PC-3 (cell line): ENCODE measurements at regions of chr6 and their contacts with region 1.

Region 1: GRCh38 chr6:18122124-18123093 is at the start of gene NHLRC1:
- DNase-seq: peak; percentile 93
- ATAC-seq: peak; percentile 98
- H3K4me3 ChIP-seq: peak within 1 kb of the TSS; percentile 69
- H3K27ac ChIP-seq: peak within 1 kb of the TSS; percentile 52
- H3K4me1 ChIP-seq: peaks cover 14% of the 10 kb centered on the region
- H3K27me3 ChIP-seq: no peaks in the 10 kb centered on the region
- CTCF ChIP-seq: peak; percentile 92
- total RNA-seq, gene NHLRC1: 0.81 and 1.3 TPM in 2 replicates

Region 2: GRCh38 chr6:17907406-17908229 is 214.8 kb before region 1 on chr6:
- CTCF ChIA-PET with region 1: no interaction called
- POLR2A ChIA-PET with region 1: no interaction called
- intact Hi-C with region 1: loop called (anchors 5 kb)
- DNase-seq: peak; percentile 97
- ATAC-seq: peak; percentile 94
- H3K4me3 ChIP-seq: no peak overlapping the region
- H3K27ac ChIP-seq: peak overlapping the region; percentile 88
- H3K4me1 ChIP-seq: peaks cover 43% of the 10 kb centered on the region
- H3K27me3 ChIP-seq: no peaks in the 10 kb centered on the region
- CTCF ChIP-seq: peak; percentile 56

Region 3: DNA sequence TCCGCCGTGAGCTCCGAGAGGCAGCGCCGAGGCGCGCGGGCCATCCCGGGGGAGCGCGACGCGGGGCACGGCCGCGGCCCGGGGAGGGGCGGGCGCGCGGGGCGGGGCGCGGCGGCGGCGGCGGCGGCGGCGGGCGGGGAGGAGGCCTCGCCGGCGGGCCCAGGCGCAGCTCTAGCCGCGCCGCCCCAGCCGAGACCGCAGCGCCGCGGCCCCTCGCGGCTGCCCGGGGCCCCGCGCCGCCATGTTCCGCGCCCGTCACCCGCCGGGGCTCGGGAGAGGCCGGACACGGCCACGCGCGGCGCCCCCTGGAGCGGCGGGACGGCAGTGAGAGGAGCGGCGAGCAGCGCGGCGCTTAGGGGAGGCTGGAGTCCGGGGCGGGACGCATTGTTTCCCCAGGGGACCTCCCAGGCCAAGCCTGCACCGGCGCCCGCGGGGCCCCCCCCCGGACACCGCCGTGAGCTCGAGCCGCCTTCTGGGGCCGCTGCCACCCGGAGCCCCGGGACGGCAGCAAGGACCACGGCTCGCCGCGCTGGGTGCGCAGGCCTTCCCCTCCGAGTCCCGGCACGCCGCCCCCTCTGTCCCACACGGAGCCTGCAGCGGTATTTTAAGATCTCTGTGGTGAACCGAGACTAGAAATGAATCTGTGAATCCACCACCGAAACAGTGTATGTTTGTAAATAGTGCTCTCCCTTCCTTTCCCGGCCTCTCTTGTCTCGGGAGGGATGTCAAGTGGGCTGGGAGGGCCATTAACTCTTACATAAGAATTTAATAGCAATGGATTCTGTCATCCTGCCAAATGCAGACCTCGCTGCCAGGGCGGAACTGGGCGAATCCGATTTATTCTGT is 134.6 kb before region 1 on chr6 and contains the start of gene KIF13A:
- CTCF ChIA-PET with region 1: no interaction called
- POLR2A ChIA-PET with region 1: interaction called, 3 read pairs
- intact Hi-C with region 1: loop called (anchors 1 kb)
- DNase-seq: peak; percentile 71
- ATAC-seq: peak; percentile 66
- H3K4me3 ChIP-seq: peak within 1 kb of the TSS; percentile 86
- H3K27ac ChIP-seq: peak within 1 kb of the TSS; percentile 54
- H3K4me1 ChIP-seq: peaks cover 43% of the 10 kb centered on the region
- H3K27me3 ChIP-seq: no peaks in the 10 kb centered on the region
- CTCF ChIP-seq: peak; percentile 21
- total RNA-seq, gene KIF13A: 21.3 and 27.1 TPM in 2 replicates

Region 4: GRCh38 chr6:18047406-18047805 is 75.0 kb before region 1 on chr6:
- CTCF ChIA-PET with region 1: no interaction called
- POLR2A ChIA-PET with region 1: interaction called, 3 read pairs
- intact Hi-C with region 1: loop called (anchors 2 kb)
- DNase-seq: peak; percentile 58
- ATAC-seq: peak; percentile 49
- H3K4me3 ChIP-seq: no peak overlapping the region
- H3K27ac ChIP-seq: 0 out of 2 replicates have a peak overlapping the region, but pooled peaks have one; percentile 0
- H3K4me1 ChIP-seq: peaks cover 15% of the 10 kb centered on the region
- H3K27me3 ChIP-seq: no peaks in the 10 kb centered on the region
- CTCF ChIP-seq: no peak